OCI-LY7 (cell line): ENCODE measurements at regions of chr10 and their contacts with region 1.

Region 1: DNA sequence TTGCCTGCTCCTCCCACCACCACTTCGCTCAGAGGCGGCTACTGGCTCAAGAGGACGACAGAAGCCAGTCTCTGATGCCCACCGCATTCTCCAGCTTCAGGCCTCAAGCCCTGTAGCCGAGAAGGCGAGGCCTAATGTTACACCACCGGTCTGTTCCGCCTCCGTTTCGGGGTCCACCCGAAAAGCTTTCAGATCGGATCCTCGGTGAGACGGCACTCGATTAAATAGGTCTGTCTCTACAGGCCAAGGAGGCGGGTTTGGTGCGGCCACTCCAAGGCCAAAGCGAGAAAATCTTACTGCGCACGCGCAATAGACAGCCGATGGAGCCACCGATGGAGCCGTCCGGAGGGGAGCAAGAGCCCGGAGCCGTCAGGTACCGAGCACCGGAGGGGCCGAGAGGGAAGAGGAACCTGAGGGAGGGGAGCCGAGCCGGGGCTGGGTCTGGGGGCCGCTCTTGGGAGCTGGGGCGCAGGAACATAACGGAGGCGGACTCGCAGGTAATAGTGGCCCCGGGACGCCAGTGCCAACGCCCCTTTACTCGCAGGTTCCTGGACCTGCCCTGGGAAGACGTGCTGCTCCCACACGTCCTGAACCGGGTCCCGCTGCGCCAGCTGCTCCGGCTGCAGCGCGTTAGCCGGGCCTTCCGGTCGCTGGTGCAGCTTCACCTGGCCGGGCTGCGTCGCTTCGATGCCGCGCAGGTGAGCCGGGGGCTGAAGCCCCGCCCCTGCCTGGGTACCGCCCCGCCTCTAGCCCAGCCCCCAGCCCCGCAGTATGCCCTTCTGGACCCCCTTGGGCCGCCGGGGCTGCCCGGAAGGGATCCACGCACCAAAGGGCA is at the start of gene FBXL15:
- DNase-seq: peak; percentile 99
- H3K4me3 ChIP-seq: peak within 1 kb of the TSS; percentile 79
- H3K27ac ChIP-seq: peak within 1 kb of the TSS; percentile 82
- H3K4me1 ChIP-seq: peaks cover 46% of the 10 kb centered on the region
- CTCF ChIP-seq: no peak
- total RNA-seq, gene FBXL15: 13.3 and 20.9 TPM in 2 replicates

Region 2: GRCh38 chr10:102399217-102400089 is 21.6 kb before region 1 on chr10:
- CTCF ChIA-PET with region 1: interaction called, 3 read pairs
- POLR2A ChIA-PET with region 1: interaction called, 11 read pairs
- intact Hi-C with region 1: loop called (anchors 1 kb)
- DNase-seq: peak; percentile 90
- H3K4me3 ChIP-seq: peak overlapping the region; percentile 59
- H3K27ac ChIP-seq: peak overlapping the region; percentile 25
- H3K4me1 ChIP-seq: peaks cover 21% of the 10 kb centered on the region
- CTCF ChIP-seq: peak; percentile 90

Region 3: DNA sequence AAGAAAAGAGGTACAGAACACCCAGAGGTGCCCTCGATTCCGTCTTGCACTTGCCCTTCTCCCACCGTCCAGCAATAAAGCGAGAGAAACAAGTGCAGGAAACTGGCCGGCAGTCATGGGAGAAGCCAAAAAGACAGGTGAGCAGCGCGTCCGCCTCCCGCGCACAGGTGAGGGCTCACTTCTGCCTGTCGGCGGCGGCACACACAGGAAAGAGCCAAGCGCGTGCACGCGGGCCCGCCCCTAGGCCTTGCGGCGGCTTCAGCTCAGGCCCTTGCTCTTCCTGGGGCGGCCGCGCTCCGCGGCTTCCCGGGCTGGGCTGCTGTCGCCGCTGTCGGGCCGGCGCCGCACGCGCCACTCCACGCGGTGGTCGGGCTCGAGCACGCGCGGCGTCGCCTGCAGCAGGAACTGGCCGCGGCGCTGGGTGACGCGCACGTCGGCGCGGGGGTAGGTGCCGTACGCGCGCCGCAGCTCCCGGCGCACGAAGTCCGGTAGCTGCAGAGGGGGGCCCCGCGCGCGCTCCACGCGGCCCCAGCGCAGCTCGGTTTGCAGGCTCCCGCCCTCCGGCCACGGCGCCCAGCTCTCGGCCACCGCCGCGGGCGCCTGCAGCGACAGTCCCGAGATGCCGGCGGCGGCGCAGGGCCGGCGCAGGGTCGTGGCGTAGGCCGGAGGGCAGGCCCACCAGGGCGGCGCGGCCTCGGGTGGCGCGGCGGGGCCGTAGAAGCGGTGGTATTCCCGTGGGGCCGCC is 29.3 kb after region 1 on chr10:
- CTCF ChIA-PET with region 1: no interaction called
- POLR2A ChIA-PET with region 1: interaction called, 6 read pairs
- intact Hi-C with region 1: loop called (anchors 1 kb)
- DNase-seq: peak; percentile 94
- H3K4me3 ChIP-seq: peak overlapping the region; percentile 96
- H3K27ac ChIP-seq: peak overlapping the region; percentile 83
- H3K4me1 ChIP-seq: peaks cover 33% of the 10 kb centered on the region
- CTCF ChIP-seq: no peak

Region 4: GRCh38 chr10:102503281-102504220 is 82.5 kb after region 1 on chr10 and contains the start of gene SUFU:
- CTCF ChIA-PET with region 1: no interaction called
- POLR2A ChIA-PET with region 1: interaction called, 3 read pairs
- intact Hi-C with region 1: loop called (anchors 2 kb)
- DNase-seq: peak; percentile 100
- H3K4me3 ChIP-seq: peak within 1 kb of the TSS; percentile 98
- H3K27ac ChIP-seq: peak within 1 kb of the TSS; percentile 64
- H3K4me1 ChIP-seq: peaks cover 20% of the 10 kb centered on the region
- CTCF ChIP-seq: peak; percentile 92
- total RNA-seq, gene SUFU: 1.9 and 4.9 TPM in 2 replicates

Region 5: DNA sequence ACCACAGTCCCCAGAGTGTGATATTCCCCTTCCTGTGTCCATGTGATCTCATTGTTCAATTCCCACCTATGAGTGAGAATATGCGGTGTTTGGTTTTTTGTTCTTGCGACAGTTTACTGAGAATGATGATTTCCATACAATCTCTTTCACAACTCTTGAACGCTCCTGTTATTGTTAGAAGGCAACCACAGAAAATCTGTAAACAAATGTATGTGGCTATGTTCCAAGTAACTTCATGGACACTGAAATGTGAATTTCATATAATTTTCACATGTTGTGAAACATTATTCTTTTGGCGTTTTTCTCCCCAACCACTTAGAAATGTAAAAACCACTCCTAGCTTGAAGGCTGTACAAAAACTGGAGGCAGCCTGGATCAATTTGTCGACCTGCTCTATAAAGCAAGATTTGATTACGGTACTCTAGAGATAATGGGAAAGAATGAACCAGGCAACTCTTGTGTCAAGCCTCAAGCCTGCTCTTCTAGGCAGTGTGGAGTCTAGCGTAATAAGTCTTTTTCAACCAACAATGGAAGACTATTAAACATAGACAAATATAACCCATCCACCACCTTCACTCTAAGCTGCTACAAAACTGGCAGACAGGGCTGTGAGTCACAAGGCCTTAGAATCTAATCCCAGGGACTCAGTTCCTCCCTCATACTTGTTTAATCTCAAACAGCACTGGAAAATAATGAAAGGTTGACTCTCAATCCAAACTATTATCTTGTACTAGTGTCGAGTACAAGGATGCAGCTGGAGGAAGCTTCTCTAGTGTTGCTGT is 270.4 kb after region 1 on chr10:
- CTCF ChIA-PET with region 1: no interaction called
- POLR2A ChIA-PET with region 1: no interaction called
- intact Hi-C with region 1: no loop called
- DNase-seq: no peak
- H3K4me3 ChIP-seq: no peak overlapping the region
- H3K27ac ChIP-seq: no peak overlapping the region
- H3K4me1 ChIP-seq: no peaks in the 10 kb centered on the region
- CTCF ChIP-seq: no peak